Right lobe of liver (tissue), 6 donors: ENCODE measurements at regions of chr15 and their contacts with region 1.

Region 1: GRCh38 chr15:34209421-34210282 is at the start of gene KATNBL1:
- DNase-seq: peak; percentile 98 to 99 (median 98)
- ATAC-seq: peak; percentile 98 to 99 (median 98)
- H3K4me3 ChIP-seq: peak within 1 kb of the TSS; percentile 54 to 75 (median 70)
- H3K27ac ChIP-seq: peak within 1 kb of the TSS; percentile 30 to 75 (median 67)
- H3K4me1 ChIP-seq: peaks cover 0 to 8% (median 4%) of the 10 kb centered on the region in 4 donors
- H3K27me3 ChIP-seq: no peaks in the 10 kb centered on the region
- CTCF ChIP-seq: peak; percentile 90 to 98 (median 94)
- POLR2A ChIP-seq: peak; percentile 98
- total RNA-seq, gene KATNBL1: 12.4 to 22.4 (median 17.6) TPM

Region 2: GRCh38 chr15:34055853-34056595 is 153.6 kb before region 1 on chr15:
- intact Hi-C with region 1: loop called in 1 of 2 experiments (anchors 10 kb)
- DNase-seq: no peak
- ATAC-seq: no peak
- H3K4me3 ChIP-seq: no peak overlapping the region
- H3K27ac ChIP-seq: no peak overlapping the region
- H3K4me1 ChIP-seq: no peaks in the 10 kb centered on the region
- H3K27me3 ChIP-seq: no peaks in the 10 kb centered on the region
- CTCF ChIP-seq: no peak
- POLR2A ChIP-seq: no peak

Region 3: DNA sequence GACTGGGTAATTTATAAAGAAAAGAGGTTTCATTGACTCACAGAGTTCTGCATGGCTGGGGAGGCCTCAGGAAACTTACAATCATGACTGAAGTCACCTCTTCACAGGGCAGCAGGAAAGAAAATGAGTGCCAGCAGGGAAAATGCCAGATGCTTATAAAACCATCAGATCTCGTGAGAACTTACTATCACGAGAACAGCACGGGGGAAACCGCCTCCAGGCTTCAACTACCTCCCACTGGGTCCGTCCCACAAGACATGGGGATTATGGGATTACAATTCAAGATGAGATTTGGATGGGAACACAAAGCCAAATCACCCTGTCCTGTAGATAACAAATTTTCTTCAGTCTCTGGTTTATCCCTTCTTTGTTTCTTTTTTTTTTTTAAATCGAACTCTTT is 139.6 kb before region 1 on chr15:
- intact Hi-C with region 1: no loop called
- DNase-seq: no peak
- ATAC-seq: no peak
- H3K4me3 ChIP-seq: no peak overlapping the region
- H3K27ac ChIP-seq: no peak overlapping the region
- H3K4me1 ChIP-seq: no peaks in the 10 kb centered on the region
- H3K27me3 ChIP-seq: no peaks in the 10 kb centered on the region
- CTCF ChIP-seq: no peak
- POLR2A ChIP-seq: no peak

Region 4: DNA sequence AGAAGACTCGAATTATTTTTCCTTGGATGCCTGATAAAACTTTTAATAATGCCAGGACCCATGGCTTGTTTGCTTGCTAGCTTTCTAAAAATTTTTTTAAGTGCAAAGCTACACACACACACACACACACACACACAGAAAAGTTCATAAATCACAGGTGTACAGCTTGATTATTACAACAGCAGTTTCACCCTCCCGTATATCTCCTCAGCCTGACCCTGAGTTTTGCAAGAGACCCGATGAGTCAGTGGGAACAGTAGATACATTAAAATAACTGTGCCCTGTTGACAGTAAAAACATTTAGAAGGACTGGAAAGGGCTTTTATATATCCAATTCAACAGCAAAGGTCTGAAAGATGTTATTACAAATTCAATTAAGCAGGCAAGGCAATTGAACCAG is 61.8 kb after region 1 on chr15:
- intact Hi-C with region 1: no loop called
- DNase-seq: no peak
- ATAC-seq: peak in 1 of 4 donors; percentile 93
- H3K4me3 ChIP-seq: no peak overlapping the region
- H3K27ac ChIP-seq: no peak overlapping the region
- H3K4me1 ChIP-seq: no peaks in the 10 kb centered on the region
- H3K27me3 ChIP-seq: no peaks in the 10 kb centered on the region
- CTCF ChIP-seq: no peak
- POLR2A ChIP-seq: no peak